ENCODE measurements at regions of chr1 and their contacts with region 1.

Region 1: DNA sequence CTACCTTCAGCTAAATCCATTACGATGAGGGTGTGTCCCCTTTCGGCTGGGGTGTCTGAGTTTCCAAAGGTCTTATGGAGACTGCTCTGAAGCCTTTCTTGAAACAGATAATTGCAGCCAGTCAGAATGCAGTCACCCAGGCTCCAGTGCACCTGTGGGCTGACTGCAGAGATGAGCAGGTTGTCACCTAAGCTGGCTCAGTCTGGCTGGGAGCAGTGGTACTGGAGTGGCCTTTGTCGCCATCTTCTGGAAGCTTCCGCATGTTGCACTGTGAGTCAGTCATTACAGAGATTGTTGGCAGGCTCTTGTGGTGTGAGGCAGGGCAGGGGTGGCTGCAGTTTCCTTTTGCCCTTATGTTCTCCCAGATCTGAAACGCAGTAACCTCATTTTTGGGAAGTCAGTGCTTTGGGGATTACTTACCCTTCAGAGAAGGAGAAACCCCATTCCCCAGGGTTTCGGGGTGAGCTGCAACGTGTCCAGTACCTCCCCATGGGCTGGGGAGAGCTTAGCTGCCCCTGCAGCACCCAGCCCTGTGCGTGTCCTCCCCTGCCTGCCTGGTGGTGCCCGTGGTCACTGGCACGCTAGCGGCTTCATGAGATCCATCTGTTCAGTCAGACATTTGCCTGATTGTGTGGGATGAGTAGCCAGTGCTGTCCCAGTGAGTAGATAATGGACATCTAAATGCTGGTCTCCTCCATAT is 48.0 kb downstream of the SMYD2 start:
- DNase-seq: peak; percentile 53 to 82 (median 75)
- ATAC-seq: peak; percentile 93
- H3K4me3 ChIP-seq: no peak overlapping the region
- H3K4me3 Mint-ChIP-seq: no peak overlapping the region
- H3K27ac ChIP-seq: no peak overlapping the region
- H3K27ac Mint-ChIP-seq: peak overlapping the region in 5 of 9 donors; percentile 14 to 80 (median 41)
- H3K4me1 ChIP-seq: no peaks in the 10 kb centered on the region
- H3K4me1 Mint-ChIP-seq: peaks cover 0 to 11% (median 0%) of the 10 kb centered on the region in 7 donors
- H3K27me3 ChIP-seq: no peaks in the 10 kb centered on the region
- H3K27me3 Mint-ChIP-seq: no peaks in the 10 kb centered on the region

Region 2: DNA sequence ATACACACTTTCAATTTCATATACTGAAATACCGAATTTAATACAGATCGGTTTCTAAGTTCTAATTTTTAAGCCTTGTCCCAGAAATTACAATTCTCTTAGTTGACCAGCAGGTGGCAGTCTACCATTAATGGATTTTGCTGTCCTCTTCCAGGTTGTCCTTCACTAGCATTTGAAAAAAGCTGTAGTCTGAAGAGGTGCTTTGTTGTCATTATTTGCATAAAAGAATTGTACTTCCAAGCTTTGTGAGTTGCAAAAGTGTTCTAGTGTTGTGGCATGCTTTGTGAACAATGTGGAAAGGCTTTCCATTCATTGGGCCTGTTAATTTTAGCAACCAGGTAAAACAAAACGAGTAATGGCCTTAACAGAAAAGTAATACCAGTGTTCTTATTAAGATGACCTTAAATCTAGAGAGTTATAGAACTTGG is 1084.2 kb before region 1 on chr1:
- CTCF ChIA-PET with region 1: interaction called, 4 read pairs
- POLR2A ChIA-PET with region 1: no interaction called
- intact Hi-C with region 1: loop called in 1 of 2 experiments (anchors 2 kb)
- DNase-seq: peak in 5 of 9 donors; percentile 13 to 44 (median 34)
- ATAC-seq: peak; percentile 40
- H3K4me3 ChIP-seq: no peak overlapping the region
- H3K4me3 Mint-ChIP-seq: no peak overlapping the region
- H3K27ac ChIP-seq: no peak overlapping the region
- H3K27ac Mint-ChIP-seq: no peak overlapping the region
- H3K4me1 ChIP-seq: no peaks in the 10 kb centered on the region
- H3K4me1 Mint-ChIP-seq: no peaks in the 10 kb centered on the region
- H3K27me3 ChIP-seq: no peaks in the 10 kb centered on the region
- H3K27me3 Mint-ChIP-seq: no peaks in the 10 kb centered on the region

Region 3: GRCh38 chr1:213987927-213988506 is 340.9 kb before region 1 on chr1 and contains the start of gene PROX1:
- CTCF ChIA-PET with region 1: no interaction called
- POLR2A ChIA-PET with region 1: no interaction called
- intact Hi-C with region 1: loop called in 1 of 2 experiments (anchors 5 kb)
- DNase-seq: peak in 7 of 9 donors; percentile 58 to 74 (median 70)
- ATAC-seq: peak; percentile 81
- H3K4me3 ChIP-seq: peak within 1 kb of the TSS; percentile 56
- H3K4me3 Mint-ChIP-seq: peak within 1 kb of the TSS; percentile 85 to 97 (median 91)
- H3K27ac ChIP-seq: no peak within 1 kb of the TSS
- H3K27ac Mint-ChIP-seq: peak within 1 kb of the TSS in 8 of 9 donors; percentile 32 to 91 (median 89)
- H3K4me1 ChIP-seq: peaks cover 0 to 45% of the 10 kb centered on the region in 2 donors
- H3K4me1 Mint-ChIP-seq: peaks cover 31 to 67% (median 60%) of the 10 kb centered on the region in 7 donors
- H3K27me3 ChIP-seq: peaks cover 0 to 37% of the 10 kb centered on the region in 2 donors
- H3K27me3 Mint-ChIP-seq: peaks cover 90 to 99% (median 95%) of the 10 kb centered on the region in 5 donors
- total RNA-seq, gene PROX1: not detected

Region 4: GRCh38 chr1:214050513-214051401 is 278.2 kb before region 1 on chr1:
- CTCF ChIA-PET with region 1: no interaction called
- POLR2A ChIA-PET with region 1: no interaction called
- intact Hi-C with region 1: no loop called
- DNase-seq: no peak
- ATAC-seq: no peak
- H3K4me3 ChIP-seq: no peak overlapping the region
- H3K4me3 Mint-ChIP-seq: no peak overlapping the region
- H3K27ac ChIP-seq: no peak overlapping the region
- H3K27ac Mint-ChIP-seq: no peak overlapping the region
- H3K4me1 ChIP-seq: no peaks in the 10 kb centered on the region
- H3K4me1 Mint-ChIP-seq: no peaks in the 10 kb centered on the region
- H3K27me3 ChIP-seq: no peaks in the 10 kb centered on the region
- H3K27me3 Mint-ChIP-seq: peaks cover 0 to 7% (median 4%) of the 10 kb centered on the region in 5 donors

Region 5: DNA sequence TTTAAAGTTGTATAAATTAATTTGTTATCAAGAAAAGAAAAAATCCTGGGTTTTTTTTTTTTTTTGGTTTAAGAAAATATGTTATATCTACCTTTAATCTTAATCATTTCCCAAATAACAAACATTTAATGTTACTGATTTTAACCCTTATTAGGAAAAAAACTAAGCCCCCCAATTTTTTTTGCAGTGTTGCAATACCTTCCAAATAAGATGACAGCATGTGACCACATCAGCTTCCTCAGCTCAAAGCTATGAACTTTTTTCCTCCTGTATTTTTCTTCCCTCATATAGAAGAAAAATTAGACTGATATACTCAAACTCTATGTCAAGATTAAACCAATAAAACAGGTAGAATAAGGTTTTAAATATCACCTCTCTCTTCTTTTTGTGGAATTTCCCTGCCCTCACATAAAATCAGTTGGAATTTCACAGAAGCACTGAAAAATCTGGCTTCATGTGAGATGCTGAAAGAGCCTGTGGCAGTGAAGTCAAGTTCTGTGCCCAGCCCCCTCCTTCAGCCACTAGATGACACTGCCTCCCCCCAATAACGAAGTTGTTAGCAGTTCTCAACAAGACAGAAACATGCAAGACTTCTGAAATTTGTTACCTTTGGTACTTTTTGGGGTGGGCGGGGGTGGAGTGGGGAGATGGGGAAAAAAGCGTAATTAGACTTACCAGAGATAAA is 57.6 kb before region 1 on chr1:
- CTCF ChIA-PET with region 1: interaction called, 33 read pairs
- POLR2A ChIA-PET with region 1: interaction called, 5 read pairs
- intact Hi-C with region 1: loop called in 1 of 2 experiments (anchors 2 kb)
- DNase-seq: no peak
- ATAC-seq: no peak
- H3K4me3 ChIP-seq: no peak overlapping the region
- H3K4me3 Mint-ChIP-seq: no peak overlapping the region
- H3K27ac ChIP-seq: no peak overlapping the region
- H3K27ac Mint-ChIP-seq: no peak overlapping the region
- H3K4me1 ChIP-seq: no peaks in the 10 kb centered on the region
- H3K4me1 Mint-ChIP-seq: peaks cover 0 to 10% (median 0%) of the 10 kb centered on the region in 7 donors
- H3K27me3 ChIP-seq: no peaks in the 10 kb centered on the region
- H3K27me3 Mint-ChIP-seq: peaks cover 0 to 48% (median 15%) of the 10 kb centered on the region in 5 donors

Region 6: GRCh38 chr1:214386747-214387146 is 57.8 kb after region 1 on chr1:
- CTCF ChIA-PET with region 1: no interaction called
- POLR2A ChIA-PET with region 1: no interaction called
- intact Hi-C with region 1: loop called in 1 of 2 experiments (anchors 2 kb)
- DNase-seq: peak in 1 of 9 donors; percentile 34
- ATAC-seq: no peak
- H3K4me3 ChIP-seq: no peak overlapping the region
- H3K4me3 Mint-ChIP-seq: peak overlapping the region in 1 of 10 donors; percentile 80
- H3K27ac ChIP-seq: no peak overlapping the region
- H3K27ac Mint-ChIP-seq: peak overlapping the region in 2 of 9 donors; percentile 47 to 94
- H3K4me1 ChIP-seq: no peaks in the 10 kb centered on the region
- H3K4me1 Mint-ChIP-seq: peaks cover 0 to 26% (median 0%) of the 10 kb centered on the region in 7 donors
- H3K27me3 ChIP-seq: no peaks in the 10 kb centered on the region
- H3K27me3 Mint-ChIP-seq: no peaks in the 10 kb centered on the region

Region 7: GRCh38 chr1:214466403-214467077 is 137.6 kb after region 1 on chr1:
- CTCF ChIA-PET with region 1: no interaction called
- POLR2A ChIA-PET with region 1: no interaction called
- intact Hi-C with region 1: no loop called
- DNase-seq: no peak
- ATAC-seq: no peak
- H3K4me3 ChIP-seq: no peak overlapping the region
- H3K4me3 Mint-ChIP-seq: no peak overlapping the region
- H3K27ac ChIP-seq: no peak overlapping the region
- H3K27ac Mint-ChIP-seq: no peak overlapping the region
- H3K4me1 ChIP-seq: no peaks in the 10 kb centered on the region
- H3K4me1 Mint-ChIP-seq: no peaks in the 10 kb centered on the region
- H3K27me3 ChIP-seq: no peaks in the 10 kb centered on the region
- H3K27me3 Mint-ChIP-seq: peaks cover 0 to 15% (median 9%) of the 10 kb centered on the region in 5 donors

Region 8: DNA sequence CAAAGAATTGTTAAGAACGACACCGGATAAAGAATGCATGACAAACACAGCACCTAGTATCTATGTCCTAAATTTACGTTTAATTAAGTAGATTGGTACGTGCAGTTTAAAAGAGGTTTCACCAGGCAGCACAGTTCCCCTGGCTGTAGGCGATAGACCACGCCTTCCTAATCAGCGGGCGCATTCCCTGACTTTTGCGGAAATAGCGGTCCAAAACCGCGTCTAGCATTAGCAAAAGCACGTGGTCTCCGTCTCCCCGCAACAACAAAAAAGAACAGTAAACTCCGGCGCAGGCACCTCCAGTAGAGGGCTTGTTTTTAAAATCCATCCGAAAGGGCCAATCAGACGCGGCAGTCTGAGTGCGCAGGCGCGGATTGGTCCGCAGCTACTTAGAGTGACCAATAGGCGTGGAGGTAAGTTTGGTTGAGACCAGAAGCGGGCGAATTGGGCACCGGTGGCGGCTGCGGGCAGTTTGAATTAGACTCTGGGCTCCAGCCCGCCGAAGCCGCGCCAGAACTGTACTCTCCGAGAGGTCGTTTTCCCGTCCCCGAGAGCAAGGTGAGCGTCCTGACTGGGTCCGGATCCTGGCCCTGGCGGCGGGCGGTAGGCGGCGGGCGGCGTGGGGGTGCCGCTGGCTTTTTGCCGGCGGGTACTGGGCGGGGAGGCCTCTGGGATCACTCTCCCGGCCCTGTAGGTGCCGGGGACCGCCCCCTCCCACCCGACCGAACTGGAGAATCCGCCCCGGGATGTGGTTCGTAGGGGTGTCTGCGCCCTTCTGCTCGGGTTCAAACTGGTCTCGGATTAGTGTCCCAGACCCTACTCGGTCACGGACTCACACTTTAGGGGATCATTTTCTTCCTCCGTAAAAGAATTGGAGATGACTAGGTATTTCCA is 274.1 kb after region 1 on chr1 and contains the start of gene CENPF:
- CTCF ChIA-PET with region 1: no interaction called
- POLR2A ChIA-PET with region 1: no interaction called
- intact Hi-C with region 1: loop called in 1 of 2 experiments (anchors 5 kb)
- DNase-seq: peak; percentile 79 to 96 (median 94)
- ATAC-seq: peak; percentile 99
- H3K4me3 ChIP-seq: peak within 1 kb of the TSS; percentile 60
- H3K4me3 Mint-ChIP-seq: peak within 1 kb of the TSS; percentile 86 to 97 (median 92)
- H3K27ac ChIP-seq: peak within 1 kb of the TSS; percentile 48
- H3K27ac Mint-ChIP-seq: peak within 1 kb of the TSS; percentile 52 to 98 (median 87)
- H3K4me1 ChIP-seq: peaks cover 0 to 6% of the 10 kb centered on the region in 2 donors
- H3K4me1 Mint-ChIP-seq: peaks cover 6 to 29% (median 24%) of the 10 kb centered on the region in 7 donors
- H3K27me3 ChIP-seq: no peaks in the 10 kb centered on the region
- H3K27me3 Mint-ChIP-seq: peaks cover 0 to 2% (median 0%) of the 10 kb centered on the region in 5 donors
- total RNA-seq, gene CENPF: 2.1 to 79.9 (median 4.1) TPM

Region 9: DNA sequence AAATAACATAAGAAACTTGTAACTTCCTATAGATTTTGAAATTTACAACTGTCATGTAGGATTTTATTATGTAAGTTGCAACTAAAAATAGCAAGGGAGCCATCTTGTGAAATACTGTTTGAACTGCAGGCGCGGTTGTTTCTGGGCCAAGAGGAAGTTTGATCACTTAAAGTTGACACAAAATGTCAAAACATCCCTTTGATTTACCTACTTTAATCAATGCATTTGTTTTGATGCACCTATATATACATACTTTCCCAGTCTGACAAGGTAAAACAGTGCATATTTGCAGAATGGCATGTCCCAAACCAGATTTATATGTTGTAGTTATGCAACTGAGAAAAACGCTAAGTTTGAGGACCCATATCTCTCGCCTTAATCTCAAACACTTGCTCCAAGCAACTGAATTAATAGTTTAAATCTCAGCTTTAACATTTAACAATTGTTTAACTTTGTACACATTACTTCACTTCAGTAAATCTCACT is 817.5 kb after region 1 on chr1:
- CTCF ChIA-PET with region 1: no interaction called
- POLR2A ChIA-PET with region 1: no interaction called
- intact Hi-C with region 1: loop called in 1 of 2 experiments (anchors 2 kb)
- DNase-seq: peak in 4 of 9 donors; percentile 4 to 23 (median 12)
- ATAC-seq: no peak
- H3K4me3 ChIP-seq: no peak overlapping the region
- H3K4me3 Mint-ChIP-seq: no peak overlapping the region
- H3K27ac ChIP-seq: no peak overlapping the region
- H3K27ac Mint-ChIP-seq: no peak overlapping the region
- H3K4me1 ChIP-seq: no peaks in the 10 kb centered on the region
- H3K4me1 Mint-ChIP-seq: peaks cover 0 to 9% (median 0%) of the 10 kb centered on the region in 7 donors
- H3K27me3 ChIP-seq: no peaks in the 10 kb centered on the region
- H3K27me3 Mint-ChIP-seq: peaks cover 0 to 10% (median 0%) of the 10 kb centered on the region in 5 donors

Measured in naive thymus-derived CD4-positive, alpha-beta T cell (primary cell).